Activated CD4-positive, alpha-beta T cell treated with anti-CD3 and anti-CD28 coated beads for 36 hours (primary cell): ENCODE measurements at regions of chr16 and their contacts with region 1.

Region 1: DNA sequence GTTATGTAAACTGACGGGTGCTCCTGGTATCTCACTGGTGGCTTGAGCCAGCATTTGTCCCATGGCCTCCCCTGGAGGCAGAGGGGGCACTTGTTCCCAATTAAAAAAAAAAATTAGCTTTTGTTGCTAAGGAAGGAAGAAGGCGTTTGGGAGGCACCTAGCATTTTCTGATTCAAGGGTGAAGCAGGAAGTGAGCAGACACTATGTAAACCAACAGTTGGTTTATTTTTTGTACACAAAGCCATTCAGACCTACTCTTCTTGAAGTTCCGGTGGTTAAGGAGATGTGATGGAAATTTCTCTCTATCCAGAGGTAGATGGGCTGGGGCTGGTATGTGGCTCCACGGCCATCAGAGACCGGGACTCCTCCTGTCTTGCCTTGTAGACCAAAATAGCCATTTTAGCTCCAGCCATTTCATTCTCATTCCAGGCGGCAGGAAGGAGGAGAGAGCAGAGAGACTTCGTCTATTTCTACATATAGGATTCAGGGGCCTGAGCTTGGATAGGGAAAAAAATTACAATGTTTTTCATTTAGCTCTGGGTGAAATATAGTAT is 103.0 kb downstream of the SNX29 start:
- DNase-seq: peak; percentile 13
- ATAC-seq: no peak
- H3K4me3 Mint-ChIP-seq: peak overlapping the region; percentile 53
- H3K27ac Mint-ChIP-seq: peak overlapping the region; percentile 97
- H3K4me1 Mint-ChIP-seq: peaks cover 76% of the 10 kb centered on the region
- H3K27me3 Mint-ChIP-seq: no peaks in the 10 kb centered on the region

Region 2: DNA sequence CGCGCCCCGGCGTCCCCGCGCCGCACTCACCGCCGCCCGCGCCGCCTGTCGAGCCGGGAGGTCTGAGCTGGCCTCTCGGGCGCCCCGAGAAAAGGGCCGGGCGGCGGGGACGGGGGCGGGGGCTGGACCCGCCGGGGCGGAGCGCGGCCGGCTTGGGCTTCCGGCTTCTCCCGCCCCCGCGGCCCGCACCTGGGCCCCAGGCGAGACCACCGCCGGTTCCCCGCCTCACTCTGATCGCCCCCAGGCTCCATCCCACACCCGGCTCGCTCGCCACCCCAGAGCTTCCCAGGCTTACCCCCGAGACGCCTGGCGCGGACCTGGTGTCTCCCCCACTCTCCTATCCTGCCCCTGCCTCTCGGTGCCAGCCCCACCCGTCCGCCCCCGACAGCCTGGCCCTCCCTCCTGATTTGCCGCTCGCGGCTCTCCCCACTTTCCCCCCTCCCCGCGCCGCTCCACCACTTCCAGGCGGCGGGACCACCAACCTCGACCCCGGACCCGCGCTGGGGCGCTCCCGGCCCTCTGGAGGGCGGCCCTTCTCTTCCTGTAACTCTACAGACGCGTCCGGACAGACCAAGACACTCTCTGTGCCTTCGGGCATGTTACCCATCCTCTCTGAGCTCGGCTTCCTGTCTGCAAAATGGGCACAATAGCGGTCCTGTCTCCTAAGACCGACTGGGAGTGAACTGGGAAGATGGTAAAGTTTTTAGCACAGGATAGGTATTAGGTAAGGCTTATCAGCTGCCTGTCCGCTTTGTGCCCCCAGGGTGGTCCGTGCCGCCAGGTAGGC is 492.4 kb before region 1 on chr16 and contains the start of gene LITAF:
- CTCF ChIA-PET with region 1: no interaction called
- POLR2A ChIA-PET with region 1: no interaction called
- intact Hi-C with region 1: loop called in 1 of 2 experiments (anchors 5 kb)
- DNase-seq: peak; percentile 74
- ATAC-seq: peak; percentile 53
- H3K4me3 Mint-ChIP-seq: peak within 1 kb of the TSS; percentile 89
- H3K27ac Mint-ChIP-seq: peak within 1 kb of the TSS; percentile 90
- H3K4me1 Mint-ChIP-seq: peaks cover 32% of the 10 kb centered on the region
- H3K27me3 Mint-ChIP-seq: no peaks in the 10 kb centered on the region
- total RNA-seq, gene LITAF: 99.0 to 116 TPM

Region 3: GRCh38 chr16:11851294-11852091 is 228.0 kb before region 1 on chr16 and contains the start of gene RSL1D1:
- CTCF ChIA-PET with region 1: no interaction called
- POLR2A ChIA-PET with region 1: no interaction called
- intact Hi-C with region 1: loop called in 1 of 2 experiments (anchors 2 kb)
- DNase-seq: peak; percentile 96
- ATAC-seq: peak; percentile 85
- H3K4me3 Mint-ChIP-seq: peak within 1 kb of the TSS; percentile 99
- H3K27ac Mint-ChIP-seq: peak within 1 kb of the TSS; percentile 96
- H3K4me1 Mint-ChIP-seq: peaks cover 52% of the 10 kb centered on the region
- H3K27me3 Mint-ChIP-seq: no peaks in the 10 kb centered on the region
- total RNA-seq, gene RSL1D1: 369 to 466 TPM

Region 4: DNA sequence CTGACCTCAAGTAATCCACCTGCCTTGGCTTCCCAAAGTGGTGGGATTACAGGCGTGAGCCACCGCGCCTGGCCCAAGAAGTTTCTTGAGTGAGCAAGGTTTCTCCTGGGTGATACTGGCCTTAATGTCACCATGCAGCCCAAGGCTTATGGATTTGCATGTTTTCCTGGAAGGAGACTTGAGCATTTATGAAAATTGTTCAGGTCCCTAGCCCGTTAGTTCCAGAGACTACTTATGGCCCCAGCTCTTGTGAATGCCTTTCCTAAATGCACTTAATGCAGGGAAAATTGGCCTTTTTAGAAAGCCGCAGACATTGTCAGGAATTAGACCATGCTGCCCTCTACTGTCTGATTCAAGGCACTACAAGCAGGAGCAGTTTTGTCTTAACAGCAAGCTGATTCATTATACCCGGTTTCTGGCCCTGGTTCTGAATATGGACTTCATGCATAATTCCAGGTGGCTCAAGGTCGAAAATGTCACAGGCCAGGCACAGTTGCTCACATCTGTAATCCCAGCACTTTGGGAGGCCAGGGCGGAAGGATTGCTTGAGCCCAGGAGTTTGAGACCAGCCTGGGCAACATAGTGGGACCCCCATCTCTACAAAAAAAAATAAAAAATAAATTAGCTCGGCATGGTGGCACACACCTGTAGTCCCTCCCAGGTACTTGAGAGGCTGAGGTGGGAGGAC is 11.6 kb before region 1 on chr16:
- CTCF ChIA-PET with region 1: interaction called, 28 read pairs
- POLR2A ChIA-PET with region 1: no interaction called
- intact Hi-C with region 1: no loop called
- DNase-seq: peak; percentile 67
- ATAC-seq: peak; percentile 83
- H3K4me3 Mint-ChIP-seq: no peak overlapping the region
- H3K27ac Mint-ChIP-seq: no peak overlapping the region
- H3K4me1 Mint-ChIP-seq: no peaks in the 10 kb centered on the region
- H3K27me3 Mint-ChIP-seq: no peaks in the 10 kb centered on the region

Region 5: DNA sequence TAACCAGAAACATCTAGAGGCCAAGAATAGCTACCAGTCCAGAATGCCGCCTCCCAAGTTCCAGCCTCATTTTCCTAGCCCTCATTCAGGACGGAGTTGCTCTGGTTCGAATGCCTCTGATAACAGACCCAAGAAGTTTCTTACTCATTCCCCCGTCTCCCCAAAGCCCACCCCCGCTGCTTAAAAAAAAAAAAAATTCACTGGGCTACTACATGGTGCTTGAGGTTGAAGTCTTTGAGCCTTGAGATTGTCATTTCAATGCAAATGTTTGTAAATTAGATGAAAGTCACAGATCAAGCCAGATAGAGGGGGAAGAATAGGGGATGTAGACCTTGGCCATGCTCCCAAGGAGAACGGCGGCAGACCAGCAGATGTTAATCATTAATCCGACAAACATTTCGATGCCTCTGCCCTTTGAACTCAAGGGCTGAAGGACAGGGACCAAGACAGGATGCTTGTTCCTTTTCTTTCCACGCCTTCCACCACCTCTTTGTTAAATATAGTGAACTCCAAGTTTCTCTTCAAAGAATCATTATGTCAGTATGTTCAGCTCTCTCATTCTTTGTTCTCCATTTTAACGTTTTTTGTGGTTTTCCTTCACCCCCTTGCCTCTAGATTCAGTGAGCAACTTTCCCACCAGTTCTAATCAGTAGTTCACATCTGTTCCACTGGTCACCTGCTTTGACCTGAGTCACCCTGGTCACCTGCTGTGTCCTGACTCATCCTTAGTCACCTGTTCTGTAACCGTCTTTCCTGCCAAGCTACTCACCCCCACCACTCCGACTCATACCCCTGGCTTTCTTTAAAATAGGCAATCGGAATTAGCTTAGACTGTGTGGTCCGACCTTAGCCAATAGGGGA is 533.9 kb after region 1 on chr16:
- CTCF ChIA-PET with region 1: no interaction called
- POLR2A ChIA-PET with region 1: no interaction called
- intact Hi-C with region 1: loop called in 1 of 2 experiments (anchors 2 kb)
- DNase-seq: peak; percentile 83
- ATAC-seq: peak; percentile 86
- H3K4me3 Mint-ChIP-seq: peak overlapping the region; percentile 49
- H3K27ac Mint-ChIP-seq: peak overlapping the region; percentile 89
- H3K4me1 Mint-ChIP-seq: peaks cover 50% of the 10 kb centered on the region
- H3K27me3 Mint-ChIP-seq: no peaks in the 10 kb centered on the region

Region 6: GRCh38 chr16:12803203-12804097 is 724.0 kb after region 1 on chr16 and contains the start of gene CPPED1:
- CTCF ChIA-PET with region 1: no interaction called
- POLR2A ChIA-PET with region 1: no interaction called
- intact Hi-C with region 1: loop called in 1 of 2 experiments (anchors 2 kb)
- DNase-seq: peak; percentile 95
- ATAC-seq: peak; percentile 93
- H3K4me3 Mint-ChIP-seq: peak within 1 kb of the TSS; percentile 97
- H3K27ac Mint-ChIP-seq: peak within 1 kb of the TSS; percentile 92
- H3K4me1 Mint-ChIP-seq: peaks cover 28% of the 10 kb centered on the region
- H3K27me3 Mint-ChIP-seq: no peaks in the 10 kb centered on the region
- total RNA-seq, gene CPPED1: 8.0 to 9.8 TPM